ENCODE measurements at regions of chr6 and their contacts with region 1.

Region 1: GRCh38 chr6:127516666-127517273 is 2.4 kb downstream of the MTCL3 start:
- DNase-seq: peak; percentile 56
- ATAC-seq: peak; percentile 74
- H3K4me3 ChIP-seq: peak overlapping the region; percentile 66
- H3K27ac ChIP-seq: no peak overlapping the region
- H3K4me1 ChIP-seq: no peaks in the 10 kb centered on the region
- H3K27me3 ChIP-seq: peaks cover 2% of the 10 kb centered on the region; the same call in 1 of the 2 replicates
- CTCF ChIP-seq: peak; percentile 76

Region 2: GRCh38 chr6:127464881-127465459 is 51.8 kb before region 1 on chr6:
- CTCF ChIA-PET with region 1: interaction called, 5 read pairs
- POLR2A ChIA-PET with region 1: no interaction called
- intact Hi-C with region 1: loop called (anchors 1 kb)
- DNase-seq: peak; percentile 65
- ATAC-seq: peak; percentile 85
- H3K4me3 ChIP-seq: no peak overlapping the region
- H3K27ac ChIP-seq: no peak overlapping the region
- H3K4me1 ChIP-seq: no peaks in the 10 kb centered on the region
- H3K27me3 ChIP-seq: no peaks in the 10 kb centered on the region
- CTCF ChIP-seq: peak; percentile 83

Region 3: GRCh38 chr6:127484212-127484858 is 32.4 kb before region 1 on chr6:
- CTCF ChIA-PET with region 1: interaction called, 5 read pairs
- POLR2A ChIA-PET with region 1: no interaction called
- intact Hi-C with region 1: loop called (anchors 5 kb)
- DNase-seq: peak; percentile 75
- ATAC-seq: peak; percentile 59
- H3K4me3 ChIP-seq: peak overlapping the region; percentile 50
- H3K27ac ChIP-seq: peak overlapping the region; percentile 69
- H3K4me1 ChIP-seq: peaks cover 53% of the 10 kb centered on the region
- H3K27me3 ChIP-seq: no peaks in the 10 kb centered on the region
- CTCF ChIP-seq: no peak